PC-9 (cell line): ENCODE measurements at regions of chr15 and their contacts with region 1.

Region 1: DNA sequence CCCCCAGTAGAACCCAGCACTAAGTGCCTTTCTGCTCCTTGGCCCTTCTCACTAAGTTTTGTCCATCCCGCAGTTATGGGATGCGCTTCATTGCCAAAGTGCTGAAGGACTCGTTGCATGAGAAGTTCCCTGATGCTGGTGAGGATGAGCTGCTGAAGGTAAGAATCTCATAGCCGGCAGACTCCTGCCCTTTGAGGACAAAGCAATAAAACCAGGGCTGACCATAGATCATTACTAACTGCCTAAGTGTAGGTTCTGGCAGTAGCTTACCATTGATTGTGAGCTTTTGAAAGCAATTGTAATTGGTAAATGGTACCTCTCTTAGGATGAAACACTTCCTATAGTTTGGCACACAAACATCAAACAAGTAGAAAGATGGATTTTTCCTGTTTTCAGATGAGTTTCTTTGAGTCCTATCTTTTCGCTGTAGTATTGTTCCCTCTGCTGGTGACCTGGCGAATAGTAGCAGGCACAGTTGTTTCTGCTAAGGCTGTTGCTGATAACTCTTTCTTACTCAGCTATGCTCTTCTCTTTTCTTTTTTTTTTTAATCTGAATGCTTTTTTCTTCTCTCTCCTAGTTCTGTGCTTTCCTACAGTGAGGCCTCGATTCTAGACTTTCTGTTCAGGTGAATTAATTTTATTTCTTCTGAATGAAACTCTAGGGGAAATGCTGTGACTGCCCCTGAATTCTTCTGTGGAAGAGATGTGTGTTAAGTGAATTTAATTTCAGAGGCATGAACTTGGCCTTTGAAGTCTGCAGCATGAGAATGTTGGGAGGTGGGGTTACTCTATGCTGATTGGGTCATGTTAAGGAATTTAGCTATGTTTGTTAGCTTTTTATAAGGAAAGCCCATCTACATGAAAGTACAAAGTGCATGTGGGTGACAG is 47.4 kb upstream of the CRTC3 start:
- DNase-seq: peak in 1 of 2 experiments; percentile 24
- H3K4me3 ChIP-seq: no peak overlapping the region
- H3K27ac ChIP-seq: no peak overlapping the region
- H3K4me1 ChIP-seq: peaks cover 42% of the 10 kb centered on the region
- H3K27me3 ChIP-seq: no peaks in the 10 kb centered on the region
- CTCF ChIP-seq: peak; percentile 87

Region 2: GRCh38 chr15:90233376-90234095 is 248.8 kb before region 1 on chr15 and contains the start of gene CIB1:
- CTCF ChIA-PET with region 1: no interaction called
- POLR2A ChIA-PET with region 1: no interaction called
- intact Hi-C with region 1: loop called (anchors 1 kb)
- DNase-seq: peak; percentile 87 to 98
- H3K4me3 ChIP-seq: peak within 1 kb of the TSS; percentile 86
- H3K27ac ChIP-seq: peak within 1 kb of the TSS; percentile 74
- H3K4me1 ChIP-seq: peaks cover 57% of the 10 kb centered on the region
- H3K27me3 ChIP-seq: no peaks in the 10 kb centered on the region
- CTCF ChIP-seq: peak; percentile 64; the same call in 1 of the 2 replicates
- total RNA-seq, gene CIB1: 113 and 127 TPM in 2 replicates

Region 3: DNA sequence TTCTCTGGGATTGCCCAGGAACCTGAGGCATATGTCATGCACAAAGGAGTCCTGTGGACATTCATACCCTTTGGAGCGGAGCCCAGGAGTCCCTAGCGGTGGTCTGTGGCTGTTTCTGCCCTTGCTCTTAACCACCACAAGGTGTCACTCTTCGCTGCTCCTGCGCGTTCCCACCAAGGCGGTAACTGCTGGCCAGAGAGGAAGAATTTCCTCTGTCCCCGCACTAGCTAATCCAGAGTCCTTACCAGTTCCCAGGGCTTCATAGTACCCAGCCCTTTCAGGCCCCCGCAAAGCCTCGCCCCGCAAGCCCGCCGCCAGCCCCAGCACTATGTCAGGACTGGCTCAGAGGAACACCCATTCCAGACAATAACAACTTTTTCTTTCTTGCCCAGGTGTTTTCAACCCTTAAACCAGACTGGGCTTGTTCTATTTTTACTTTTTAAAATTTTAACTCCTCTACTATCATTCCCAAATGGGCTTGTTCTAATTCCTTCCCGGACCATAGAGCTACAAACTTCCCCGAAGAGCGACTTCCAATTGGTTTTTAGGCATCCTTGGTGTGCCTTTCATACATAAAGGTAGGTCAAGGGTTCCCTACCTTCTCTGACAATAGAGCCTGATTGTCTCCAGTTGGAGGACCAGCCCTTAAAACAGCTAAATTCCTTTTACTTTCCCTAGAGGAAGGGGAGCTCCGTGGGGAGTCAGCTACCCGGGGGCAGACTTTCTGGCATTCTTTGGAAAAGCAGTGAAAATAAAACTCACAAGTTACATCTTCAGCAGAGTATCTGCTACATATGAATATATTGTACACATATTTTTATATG is 162.1 kb before region 1 on chr15:
- CTCF ChIA-PET with region 1: interaction called, 24 read pairs
- POLR2A ChIA-PET with region 1: interaction called, 7 read pairs
- intact Hi-C with region 1: loop called (anchors 1 kb)
- DNase-seq: peak; percentile 79 to 84
- H3K4me3 ChIP-seq: peak overlapping the region; percentile 29; the same call in 1 of the 2 replicates
- H3K27ac ChIP-seq: peak overlapping the region; percentile 31; the same call in 1 of the 2 replicates
- H3K4me1 ChIP-seq: peaks cover 26% of the 10 kb centered on the region
- H3K27me3 ChIP-seq: no peaks in the 10 kb centered on the region
- CTCF ChIP-seq: peak; percentile 91

Region 4: DNA sequence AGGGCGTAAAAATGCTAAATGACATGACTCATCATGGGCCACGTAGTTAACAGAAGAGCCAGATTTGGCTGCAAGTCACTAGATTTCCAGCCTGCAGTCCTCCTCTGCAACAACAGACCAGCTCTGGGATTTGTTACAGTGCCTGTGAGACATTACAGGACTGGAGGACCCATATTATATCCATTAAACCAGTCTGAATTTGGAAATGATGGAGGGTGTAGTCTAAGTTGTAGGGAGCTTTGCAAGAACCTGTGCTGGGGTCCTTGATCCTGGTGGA is 119.5 kb before region 1 on chr15:
- CTCF ChIA-PET with region 1: no interaction called
- POLR2A ChIA-PET with region 1: interaction called, 3 read pairs
- intact Hi-C with region 1: loop called (anchors 1 kb)
- DNase-seq: peak; percentile 21 to 71
- H3K4me3 ChIP-seq: no peak overlapping the region
- H3K27ac ChIP-seq: peak overlapping the region; percentile 94
- H3K4me1 ChIP-seq: peaks cover 47% of the 10 kb centered on the region
- H3K27me3 ChIP-seq: no peaks in the 10 kb centered on the region
- CTCF ChIP-seq: no peak

Region 5: GRCh38 chr15:90400406-90401314 is 81.7 kb before region 1 on chr15:
- CTCF ChIA-PET with region 1: no interaction called
- POLR2A ChIA-PET with region 1: no interaction called
- intact Hi-C with region 1: loop called (anchors 1 kb)
- DNase-seq: peak; percentile 70 to 98
- H3K4me3 ChIP-seq: peak overlapping the region; percentile 35; the same call in 1 of the 2 replicates
- H3K27ac ChIP-seq: peak overlapping the region; percentile 88
- H3K4me1 ChIP-seq: peaks cover 65% of the 10 kb centered on the region
- H3K27me3 ChIP-seq: no peaks in the 10 kb centered on the region
- CTCF ChIP-seq: no peak

Region 6: GRCh38 chr15:90869601-90870353 is 387.4 kb after region 1 on chr15:
- CTCF ChIA-PET with region 1: no interaction called
- POLR2A ChIA-PET with region 1: no interaction called
- intact Hi-C with region 1: loop called (anchors 5 kb)
- DNase-seq: peak; percentile 83
- H3K4me3 ChIP-seq: peak overlapping the region; percentile 73; the same call in 1 of the 2 replicates
- H3K27ac ChIP-seq: peak overlapping the region; percentile 72
- H3K4me1 ChIP-seq: peaks cover 66% of the 10 kb centered on the region
- H3K27me3 ChIP-seq: no peaks in the 10 kb centered on the region
- CTCF ChIP-seq: no peak